ENCODE measurements at regions of chr3 and their contacts with region 1.

Region 1: GRCh38 chr3:190435618-190436017 is 14.1 kb downstream of the TMEM207 start:
- DNase-seq: no peak

Region 2: GRCh38 chr3:190941694-190942260 is 506.2 kb after region 1 on chr3:
- intact Hi-C with region 1: loop called in 1 of 2 experiments (anchors 5 kb)
- DNase-seq: no peak